Naive thymus-derived CD4-positive, alpha-beta T cell (primary cell): ENCODE measurements at regions of chr1 and their contacts with region 1.

Region 1: GRCh38 chr1:230867903-230868735 is at the start of gene C1orf198:
- DNase-seq: peak; percentile 48 to 84 (median 69)
- ATAC-seq: peak; percentile 97
- H3K4me3 ChIP-seq: peak within 1 kb of the TSS; percentile 76
- H3K4me3 Mint-ChIP-seq: peak within 1 kb of the TSS; percentile 70 to 94 (median 88)
- H3K27ac ChIP-seq: peak within 1 kb of the TSS; percentile 67
- H3K27ac Mint-ChIP-seq: peak within 1 kb of the TSS in 8 of 9 donors; percentile 29 to 84 (median 62)
- H3K4me1 ChIP-seq: peaks cover 0 to 5% of the 10 kb centered on the region in 2 donors
- H3K4me1 Mint-ChIP-seq: peaks cover 10 to 33% (median 24%) of the 10 kb centered on the region in 7 donors
- H3K27me3 ChIP-seq: peaks cover 0 to 7% of the 10 kb centered on the region in 2 donors
- H3K27me3 Mint-ChIP-seq: peaks cover 13 to 38% (median 25%) of the 10 kb centered on the region in 5 donors
- total RNA-seq, gene C1orf198: 2.9 to 6.0 (median 3.7) TPM

Region 2: GRCh38 chr1:230753586-230754251 is 114.4 kb before region 1 on chr1:
- CTCF ChIA-PET with region 1: no interaction called
- POLR2A ChIA-PET with region 1: no interaction called
- intact Hi-C with region 1: loop called in 1 of 2 experiments (anchors 5 kb)
- DNase-seq: peak in 6 of 9 donors; percentile 3 to 65 (median 42)
- ATAC-seq: peak; percentile 26
- H3K4me3 ChIP-seq: no peak overlapping the region
- H3K4me3 Mint-ChIP-seq: peak overlapping the region in 8 of 10 donors; percentile 9 to 89 (median 75)
- H3K27ac ChIP-seq: no peak overlapping the region
- H3K27ac Mint-ChIP-seq: peak overlapping the region in 3 of 9 donors; percentile 64 to 75 (median 73)
- H3K4me1 ChIP-seq: no peaks in the 10 kb centered on the region
- H3K4me1 Mint-ChIP-seq: peaks cover 0 to 17% (median 4%) of the 10 kb centered on the region in 7 donors
- H3K27me3 ChIP-seq: no peaks in the 10 kb centered on the region
- H3K27me3 Mint-ChIP-seq: peaks cover 7 to 18% (median 12%) of the 10 kb centered on the region in 5 donors